ENCODE measurements at regions of chr9 and their contacts with region 1.

Region 1: DNA sequence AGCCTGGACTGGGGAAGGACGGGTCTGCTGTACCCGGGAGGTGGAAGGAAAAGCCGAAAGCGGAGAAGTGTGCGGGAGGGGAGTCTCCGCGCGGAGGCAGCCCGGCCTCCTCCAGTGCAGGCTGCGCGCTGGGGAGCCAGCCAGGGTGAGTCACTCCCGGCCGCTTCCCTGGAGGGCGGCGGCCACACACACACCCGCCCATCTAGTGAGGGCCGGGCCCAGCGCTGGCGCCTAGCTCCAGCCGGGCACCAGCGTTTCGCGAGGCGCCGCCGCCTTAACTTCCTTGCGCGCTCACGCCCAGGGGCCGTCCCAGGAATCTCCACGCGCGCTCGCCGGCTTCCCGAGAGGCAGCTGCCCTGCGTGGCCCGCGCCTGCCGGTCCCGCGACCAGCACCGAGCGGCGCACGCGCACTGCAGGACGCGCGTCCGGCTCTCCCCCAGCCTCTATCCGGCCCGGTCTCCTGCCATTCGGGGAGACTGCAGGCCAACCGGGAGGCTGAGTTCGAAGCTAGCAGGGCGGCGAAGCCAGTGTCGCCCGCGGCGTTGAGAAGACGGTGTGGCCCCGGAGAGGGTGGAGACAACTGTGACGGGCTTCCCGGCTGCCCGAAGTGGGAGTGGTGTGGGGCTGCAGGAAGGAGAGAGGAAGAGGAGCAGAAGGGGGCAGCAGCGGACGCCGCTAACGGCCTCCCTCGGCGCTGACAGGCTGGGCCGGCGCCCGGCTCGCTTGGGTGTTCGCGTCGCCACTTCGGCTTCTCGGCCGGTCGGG is at the start of gene JAK2:
- DNase-seq: peak; percentile 93
- ATAC-seq: peak; percentile 89
- H3K4me3 ChIP-seq: peak within 1 kb of the TSS; percentile 64
- H3K27ac ChIP-seq: peak within 1 kb of the TSS; percentile 95
- H3K4me1 ChIP-seq: 0 out of 2 replicates have a peak, but pooled peaks cover 4% of the 10 kb centered on the region
- H3K27me3 ChIP-seq: no peaks in the 10 kb centered on the region
- CTCF ChIP-seq: peak; percentile 57
- POLR2A ChIP-seq: peak; percentile 55
- RAD21 ChIP-seq: peak; percentile 37
- total RNA-seq, gene JAK2: 6.1 and 7.2 TPM in 2 replicates

Region 2: GRCh38 chr9:4382722-4383317 is 602.0 kb before region 1 on chr9:
- CTCF ChIA-PET with region 1: no interaction called
- POLR2A ChIA-PET with region 1: no interaction called
- dilution Hi-C with region 1: no loop called
- in situ Hi-C with region 1: no loop called
- intact Hi-C with region 1: loop called (anchors 1 kb)
- DNase-seq: peak; percentile 23
- ATAC-seq: peak; percentile 64; the same call in 1 of the 2 replicates
- H3K4me3 ChIP-seq: no peak overlapping the region
- H3K27ac ChIP-seq: no peak overlapping the region
- H3K4me1 ChIP-seq: no peaks in the 10 kb centered on the region
- H3K27me3 ChIP-seq: peaks cover 19% of the 10 kb centered on the region
- CTCF ChIP-seq: peak; percentile 67
- POLR2A ChIP-seq: no peak
- RAD21 ChIP-seq: peak; percentile 70

Region 3: DNA sequence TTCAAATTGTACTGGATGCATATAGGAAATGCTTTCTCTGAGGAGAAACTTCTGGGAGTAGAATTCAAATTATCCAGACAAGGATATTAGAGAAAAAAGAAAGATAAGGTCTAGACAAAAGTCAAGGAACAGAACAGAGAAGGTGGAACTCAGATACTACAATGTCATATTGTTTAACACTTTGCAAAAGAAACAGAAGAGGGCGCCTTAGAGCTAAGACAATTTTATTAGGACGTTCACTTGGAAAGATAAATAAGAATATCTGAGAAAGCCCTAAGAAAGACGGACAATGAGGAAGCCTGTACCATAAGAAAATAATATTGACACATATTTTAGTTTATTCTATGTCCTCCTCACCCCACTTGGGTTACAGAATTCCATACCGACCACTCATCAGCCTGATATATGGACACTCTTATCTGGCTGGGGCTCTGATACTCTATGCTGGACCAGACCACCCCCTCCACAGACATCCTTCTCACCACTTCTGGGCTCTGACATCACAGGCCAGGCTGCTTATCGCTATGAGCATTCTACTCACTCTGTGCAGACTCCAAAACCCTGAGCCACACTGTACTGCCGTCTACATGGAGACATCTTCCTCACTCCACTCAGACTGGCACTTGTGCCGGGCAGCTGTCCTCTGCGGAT is 234.7 kb before region 1 on chr9:
- CTCF ChIA-PET with region 1: no interaction called
- POLR2A ChIA-PET with region 1: no interaction called
- dilution Hi-C with region 1: no loop called
- in situ Hi-C with region 1: loop called (anchors 5 kb)
- intact Hi-C with region 1: no loop called
- DNase-seq: peak; percentile 61
- ATAC-seq: peak; percentile 90
- H3K4me3 ChIP-seq: no peak overlapping the region
- H3K27ac ChIP-seq: no peak overlapping the region
- H3K4me1 ChIP-seq: no peaks in the 10 kb centered on the region
- H3K27me3 ChIP-seq: no peaks in the 10 kb centered on the region
- CTCF ChIP-seq: peak; percentile 68
- POLR2A ChIP-seq: no peak
- RAD21 ChIP-seq: peak; percentile 58

Region 4: GRCh38 chr9:4792572-4793458 is 192.0 kb before region 1 on chr9 and contains the start of gene RCL1:
- CTCF ChIA-PET with region 1: no interaction called
- POLR2A ChIA-PET with region 1: interaction called, 4 read pairs
- dilution Hi-C with region 1: no loop called
- in situ Hi-C with region 1: no loop called
- intact Hi-C with region 1: loop called (anchors 1 kb)
- DNase-seq: peak; percentile 92
- ATAC-seq: peak; percentile 98
- H3K4me3 ChIP-seq: peak within 1 kb of the TSS; percentile 86
- H3K27ac ChIP-seq: peak within 1 kb of the TSS; percentile 65
- H3K4me1 ChIP-seq: peaks cover 3% of the 10 kb centered on the region; the same call in 1 of the 2 replicates
- H3K27me3 ChIP-seq: no peaks in the 10 kb centered on the region
- CTCF ChIP-seq: no peak
- POLR2A ChIP-seq: peak; percentile 81
- RAD21 ChIP-seq: no peak; the same call in 1 of the 2 replicates
- total RNA-seq, gene RCL1: 13.8 and 14.7 TPM in 2 replicates

Region 5: GRCh38 chr9:4855841-4856240 is 129.0 kb before region 1 on chr9:
- CTCF ChIA-PET with region 1: no interaction called
- POLR2A ChIA-PET with region 1: no interaction called
- dilution Hi-C with region 1: no loop called
- in situ Hi-C with region 1: no loop called
- intact Hi-C with region 1: loop called (anchors 5 kb)
- DNase-seq: peak; percentile 78
- ATAC-seq: peak; percentile 95
- H3K4me3 ChIP-seq: no peak overlapping the region
- H3K27ac ChIP-seq: no peak overlapping the region
- H3K4me1 ChIP-seq: peaks cover 3% of the 10 kb centered on the region; the same call in 1 of the 2 replicates
- H3K27me3 ChIP-seq: no peaks in the 10 kb centered on the region
- CTCF ChIP-seq: no peak
- POLR2A ChIP-seq: no peak
- RAD21 ChIP-seq: no peak

Region 6: GRCh38 chr9:4923580-4924544 is 60.9 kb before region 1 on chr9:
- CTCF ChIA-PET with region 1: no interaction called
- POLR2A ChIA-PET with region 1: no interaction called
- dilution Hi-C with region 1: no loop called
- in situ Hi-C with region 1: loop called (anchors 10 kb)
- intact Hi-C with region 1: loop called (anchors 5 kb)
- DNase-seq: peak; percentile 44
- ATAC-seq: peak; percentile 56
- H3K4me3 ChIP-seq: no peak overlapping the region
- H3K27ac ChIP-seq: no peak overlapping the region
- H3K4me1 ChIP-seq: no peaks in the 10 kb centered on the region
- H3K27me3 ChIP-seq: peaks cover 2% of the 10 kb centered on the region; the same call in 1 of the 2 replicates
- CTCF ChIP-seq: peak; percentile 61
- POLR2A ChIP-seq: no peak
- RAD21 ChIP-seq: peak; percentile 56

Region 7: DNA sequence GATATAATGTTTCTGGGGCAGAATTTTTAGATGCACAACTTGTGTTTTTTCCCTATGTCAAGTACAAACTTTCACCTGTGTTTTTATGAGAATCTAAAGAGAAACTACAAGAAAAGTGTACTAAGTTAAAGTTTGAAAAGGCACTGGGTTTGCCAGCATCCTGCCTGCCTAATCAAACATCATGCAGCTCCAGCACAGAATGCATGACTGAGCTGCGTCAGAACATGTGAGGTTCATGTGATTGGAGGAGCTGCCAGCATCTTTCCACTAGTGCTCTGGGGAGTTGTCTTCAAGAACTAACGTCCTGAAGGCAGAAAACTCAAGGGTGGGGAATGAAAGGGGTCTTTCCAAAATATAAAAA is 598.0 kb after region 1 on chr9:
- CTCF ChIA-PET with region 1: no interaction called
- POLR2A ChIA-PET with region 1: no interaction called
- dilution Hi-C with region 1: no loop called
- in situ Hi-C with region 1: loop called (anchors 10 kb)
- intact Hi-C with region 1: no loop called
- DNase-seq: peak; percentile 89
- ATAC-seq: peak; percentile 59
- H3K4me3 ChIP-seq: no peak overlapping the region
- H3K27ac ChIP-seq: peak overlapping the region; percentile 46
- H3K4me1 ChIP-seq: peaks cover 14% of the 10 kb centered on the region
- H3K27me3 ChIP-seq: no peaks in the 10 kb centered on the region
- CTCF ChIP-seq: no peak
- POLR2A ChIP-seq: no peak
- RAD21 ChIP-seq: no peak

Measured in IMR-90 (cell line).